CD8-positive, alpha-beta T cell (primary cell): ENCODE measurements at regions of chr19 and their contacts with region 1.

Region 1: GRCh38 chr19:8513687-8514504 is at the start of gene ZNF414:
- DNase-seq: peak; percentile 96 to 99 (median 97)
- ATAC-seq: peak; percentile 76
- H3K4me3 ChIP-seq: peak within 1 kb of the TSS; percentile 59 to 98
- H3K4me3 Mint-ChIP-seq: peak within 1 kb of the TSS; percentile 95
- H3K27ac ChIP-seq: peak within 1 kb of the TSS; percentile 90 to 96
- H3K27ac Mint-ChIP-seq: peak within 1 kb of the TSS; percentile 99
- H3K4me1 ChIP-seq: peaks cover 65% of the 10 kb centered on the region
- H3K4me1 Mint-ChIP-seq: peaks cover 51% of the 10 kb centered on the region
- H3K27me3 ChIP-seq: no peaks in the 10 kb centered on the region
- H3K27me3 Mint-ChIP-seq: no peaks in the 10 kb centered on the region
- CTCF ChIP-seq: no peak
- total RNA-seq, gene ZNF414: 26.3 to 33.1 TPM

Region 2: GRCh38 chr19:8307965-8308866 is 205.7 kb before region 1 on chr19 and contains the start of gene CD320:
- CTCF ChIA-PET with region 1: no interaction called
- POLR2A ChIA-PET with region 1: no interaction called
- intact Hi-C with region 1: loop called in 1 of 2 experiments (anchors 1 kb)
- DNase-seq: peak; percentile 71 to 92 (median 86)
- ATAC-seq: peak; percentile 93
- H3K4me3 ChIP-seq: peak within 1 kb of the TSS; percentile 63 to 64
- H3K4me3 Mint-ChIP-seq: peak within 1 kb of the TSS; percentile 91
- H3K27ac ChIP-seq: peak within 1 kb of the TSS; percentile 64 to 71
- H3K27ac Mint-ChIP-seq: peak within 1 kb of the TSS; percentile 94
- H3K4me1 ChIP-seq: peaks cover 29% of the 10 kb centered on the region
- H3K4me1 Mint-ChIP-seq: peaks cover 31% of the 10 kb centered on the region
- H3K27me3 ChIP-seq: no peaks in the 10 kb centered on the region
- H3K27me3 Mint-ChIP-seq: no peaks in the 10 kb centered on the region
- CTCF ChIP-seq: no peak
- total RNA-seq, gene CD320: 15.7 to 19.1 TPM

Region 3: GRCh38 chr19:8412783-8413628 is 100.9 kb before region 1 on chr19 and contains the start of gene MARCHF2:
- CTCF ChIA-PET with region 1: interaction called, 3 read pairs
- POLR2A ChIA-PET with region 1: interaction called, 5 read pairs
- intact Hi-C with region 1: loop called in 1 of 2 experiments (anchors 1 kb)
- DNase-seq: peak; percentile 92 to 99 (median 96)
- ATAC-seq: peak; percentile 100
- H3K4me3 ChIP-seq: peak within 1 kb of the TSS; percentile 66 to 82
- H3K4me3 Mint-ChIP-seq: peak within 1 kb of the TSS; percentile 72
- H3K27ac ChIP-seq: no peak within 1 kb of the TSS
- H3K27ac Mint-ChIP-seq: no peak within 1 kb of the TSS
- H3K4me1 ChIP-seq: peaks cover 7% of the 10 kb centered on the region
- H3K4me1 Mint-ChIP-seq: peaks cover 8% of the 10 kb centered on the region
- H3K27me3 ChIP-seq: no peaks in the 10 kb centered on the region
- H3K27me3 Mint-ChIP-seq: no peaks in the 10 kb centered on the region
- CTCF ChIP-seq: peak; percentile 65
- total RNA-seq, gene MARCHF2: 14.5 to 17.5 TPM

Region 4: DNA sequence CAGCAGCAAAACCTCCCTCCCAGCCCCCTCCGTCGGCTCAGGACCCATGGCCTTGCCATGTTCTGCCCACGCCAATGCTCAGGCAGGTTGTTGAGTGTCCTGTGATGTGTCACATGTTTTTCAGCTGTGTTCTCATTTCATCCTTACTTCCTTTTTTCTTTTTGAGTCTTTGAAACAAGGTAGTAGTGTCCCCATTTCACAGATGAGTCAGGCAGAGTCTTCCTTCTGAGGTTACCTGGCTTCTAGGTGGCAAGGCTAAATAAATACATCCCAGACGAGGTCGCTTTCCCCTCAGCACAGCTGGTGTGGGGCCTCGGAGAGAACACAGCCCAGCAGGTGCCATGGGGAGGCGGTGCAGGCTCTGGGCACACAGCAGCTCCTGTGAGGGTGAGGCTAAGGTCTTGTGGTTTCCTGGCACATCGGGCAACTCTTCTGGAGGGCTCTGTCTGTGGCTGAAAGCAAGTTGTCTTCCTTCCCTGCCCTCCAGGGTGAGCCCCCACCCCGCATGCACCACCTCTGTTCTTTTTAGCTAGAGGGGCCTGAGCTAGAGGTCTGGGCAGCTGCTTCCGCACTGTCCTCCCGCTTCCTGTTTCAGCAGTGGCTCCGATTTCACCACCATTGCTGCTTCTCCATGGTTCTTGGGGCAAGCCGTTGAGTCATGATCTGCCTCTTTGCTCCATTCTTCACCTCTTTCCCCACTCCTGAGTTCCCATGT is 26.6 kb before region 1 on chr19:
- CTCF ChIA-PET with region 1: interaction called, 25 read pairs
- POLR2A ChIA-PET with region 1: interaction called, 12 read pairs
- intact Hi-C with region 1: loop called in 1 of 2 experiments (anchors 5 kb)
- DNase-seq: peak; percentile 29 to 83 (median 67)
- ATAC-seq: peak; percentile 82
- H3K4me3 ChIP-seq: no peak overlapping the region
- H3K4me3 Mint-ChIP-seq: peak overlapping the region; percentile 61
- H3K27ac ChIP-seq: peak overlapping the region in 1 of 2 experiments; percentile 57
- H3K27ac Mint-ChIP-seq: peak overlapping the region; percentile 91
- H3K4me1 ChIP-seq: peaks cover 27% of the 10 kb centered on the region
- H3K4me1 Mint-ChIP-seq: peaks cover 40% of the 10 kb centered on the region
- H3K27me3 ChIP-seq: no peaks in the 10 kb centered on the region
- H3K27me3 Mint-ChIP-seq: no peaks in the 10 kb centered on the region
- CTCF ChIP-seq: no peak

Region 5: DNA sequence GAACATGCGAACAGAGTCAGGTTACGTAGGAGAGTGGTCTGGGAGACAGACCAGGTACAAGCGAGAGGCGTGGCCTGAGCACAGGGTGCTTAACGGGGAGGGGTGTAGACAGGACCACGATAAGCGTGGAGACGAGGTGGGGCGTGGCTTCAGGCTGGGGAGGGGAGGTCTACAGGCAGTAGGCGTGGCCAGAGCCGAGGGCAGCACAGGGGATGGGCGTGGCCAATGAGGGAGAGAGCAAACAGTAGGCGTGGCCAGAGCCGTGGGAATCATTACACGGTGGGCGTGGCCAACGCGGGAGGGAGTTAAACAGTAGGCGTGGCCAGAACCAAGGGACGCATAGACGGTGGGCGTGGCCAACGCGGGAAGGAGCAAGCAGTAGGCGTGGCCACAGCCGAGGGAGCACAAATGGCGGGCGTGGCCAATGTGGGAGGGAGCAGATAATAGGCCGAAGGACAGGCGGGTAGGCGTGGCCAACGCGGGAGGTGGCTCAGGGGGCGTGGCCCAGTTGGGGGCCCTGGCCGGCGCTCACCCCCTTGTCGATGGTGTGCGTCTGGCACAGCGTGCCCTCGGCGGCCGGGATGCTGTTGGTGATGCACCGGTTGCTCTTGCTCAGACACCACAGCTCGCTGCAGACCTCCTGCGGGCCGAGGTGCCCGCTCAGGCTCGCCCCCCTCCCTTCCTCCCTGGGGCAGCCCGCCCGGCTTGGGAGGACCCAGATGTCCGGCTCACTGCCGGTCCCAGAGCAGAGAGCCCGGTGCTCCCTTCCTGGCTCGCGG is 78.5 kb after region 1 on chr19:
- CTCF ChIA-PET with region 1: no interaction called
- POLR2A ChIA-PET with region 1: interaction called, 3 read pairs
- intact Hi-C with region 1: loop called in 1 of 2 experiments (anchors 1 kb)
- DNase-seq: peak; percentile 91 to 98 (median 95)
- ATAC-seq: peak; percentile 86
- H3K4me3 ChIP-seq: peak overlapping the region; percentile 47 to 50
- H3K4me3 Mint-ChIP-seq: peak overlapping the region; percentile 84
- H3K27ac ChIP-seq: peak overlapping the region in 1 of 2 experiments; percentile 32
- H3K27ac Mint-ChIP-seq: peak overlapping the region; percentile 84
- H3K4me1 ChIP-seq: peaks cover 21% of the 10 kb centered on the region
- H3K4me1 Mint-ChIP-seq: peaks cover 36% of the 10 kb centered on the region
- H3K27me3 ChIP-seq: no peaks in the 10 kb centered on the region
- H3K27me3 Mint-ChIP-seq: no peaks in the 10 kb centered on the region
- CTCF ChIP-seq: no peak